Pancreas (tissue), 10 donors: ENCODE measurements at regions of chr20 and their contacts with region 1.

Region 1: DNA sequence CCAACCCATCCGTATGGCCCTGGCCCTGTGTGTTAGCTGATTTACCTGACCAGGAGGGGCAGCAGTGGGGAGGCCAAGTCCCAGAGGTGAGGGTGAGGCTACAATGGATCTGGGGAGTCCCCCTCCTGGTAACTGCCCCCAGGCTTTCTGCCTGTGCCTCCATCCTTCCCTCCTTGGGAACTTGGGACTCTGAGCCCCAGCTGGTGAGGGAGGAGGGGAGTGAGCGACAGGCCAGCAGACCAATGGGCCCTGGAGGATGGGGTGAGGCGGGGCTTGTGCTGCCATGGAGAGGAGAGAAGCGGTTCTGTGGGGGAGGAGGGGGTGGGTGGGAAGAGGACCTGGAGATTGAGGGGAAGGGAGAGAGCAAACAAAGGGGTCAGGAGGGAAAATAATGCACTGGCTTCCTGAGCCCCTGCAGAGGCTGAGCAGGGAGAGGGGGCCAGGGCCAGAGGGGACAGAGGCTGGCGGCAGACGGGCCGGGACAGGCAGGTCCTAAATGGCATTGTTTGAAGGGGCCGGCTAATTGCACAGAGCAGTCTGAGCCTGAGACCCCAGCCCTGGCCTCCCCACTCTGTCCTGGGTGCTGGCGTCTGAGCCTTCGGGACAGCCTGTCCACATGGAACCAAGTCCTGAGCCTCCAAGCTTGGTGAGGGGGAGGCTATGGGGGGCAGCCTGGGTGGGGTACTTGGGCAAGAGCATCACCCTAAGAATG is 17.5 kb downstream of the DNMT3B start:
- DNase-seq: peak in 1 of 6 donors; percentile 68
- ATAC-seq: no peak
- H3K4me3 ChIP-seq: no peak overlapping the region
- H3K27ac ChIP-seq: no peak overlapping the region
- H3K4me1 ChIP-seq: peaks cover 13 to 28% (median 25%) of the 10 kb centered on the region in 3 donors
- H3K27me3 ChIP-seq: no peaks in the 10 kb centered on the region
- CTCF ChIP-seq: no peak

Region 2: GRCh38 chr20:32681175-32682084 is 98.2 kb before region 1 on chr20:
- intact Hi-C with region 1: loop called in 2 of 3 experiments (anchors 5 kb)
- DNase-seq: no peak
- ATAC-seq: peak in 3 of 4 donors; percentile 49 to 69 (median 67)
- H3K4me3 ChIP-seq: no peak overlapping the region
- H3K27ac ChIP-seq: no peak overlapping the region
- H3K4me1 ChIP-seq: no peaks in the 10 kb centered on the region
- H3K27me3 ChIP-seq: no peaks in the 10 kb centered on the region
- CTCF ChIP-seq: no peak

Region 3: DNA sequence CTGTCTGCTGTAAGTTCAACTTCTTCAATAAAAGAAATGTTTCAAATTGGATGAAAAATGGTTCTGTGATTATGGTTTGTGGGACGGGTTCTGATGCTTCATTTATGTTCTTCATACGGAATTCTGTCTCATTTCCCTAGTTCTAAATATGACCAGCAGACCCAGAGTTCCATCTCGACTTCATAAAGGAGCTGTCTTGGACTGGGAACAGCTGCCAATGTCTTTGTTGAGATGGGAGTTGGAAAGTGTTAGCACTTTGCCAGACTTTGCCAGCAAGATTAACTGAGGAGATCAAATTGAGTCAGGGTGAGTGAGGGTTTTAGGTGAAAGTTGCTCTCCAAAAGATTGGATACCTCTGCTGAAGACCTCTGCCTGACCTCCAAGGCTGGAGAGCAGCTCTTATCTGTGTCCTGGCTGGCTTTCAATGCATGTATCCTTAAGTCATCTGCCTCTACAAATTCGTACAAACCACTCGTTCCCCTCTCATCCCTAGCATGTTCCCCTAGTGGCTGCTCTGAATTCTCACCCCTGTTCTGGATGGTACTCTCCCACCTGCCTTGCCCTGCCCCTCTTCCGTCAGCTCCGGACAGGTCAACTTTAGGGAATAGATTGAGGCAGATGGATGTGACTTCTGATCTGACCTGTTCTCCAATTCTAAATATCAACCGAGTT is 79.2 kb after region 1 on chr20 and contains the start of gene EFCAB8:
- intact Hi-C with region 1: no loop called
- DNase-seq: no peak
- ATAC-seq: no peak
- H3K4me3 ChIP-seq: no peak within 1 kb of the TSS
- H3K27ac ChIP-seq: no peak within 1 kb of the TSS
- H3K4me1 ChIP-seq: no peaks in the 10 kb centered on the region
- H3K27me3 ChIP-seq: no peaks in the 10 kb centered on the region
- CTCF ChIP-seq: no peak
- total RNA-seq, gene EFCAB8: 0.12 to 0.35 (median 0.19) TPM in 5 of 6 donors, not detected in the other

Region 4: GRCh38 chr20:33062105-33062824 is 282.6 kb after region 1 on chr20:
- intact Hi-C with region 1: no loop called
- DNase-seq: no peak
- ATAC-seq: no peak
- H3K4me3 ChIP-seq: no peak overlapping the region
- H3K27ac ChIP-seq: no peak overlapping the region
- H3K4me1 ChIP-seq: no peaks in the 10 kb centered on the region
- H3K27me3 ChIP-seq: no peaks in the 10 kb centered on the region
- CTCF ChIP-seq: no peak